ENCODE measurements at regions of chr14 and their contacts with region 1.

Region 1: DNA sequence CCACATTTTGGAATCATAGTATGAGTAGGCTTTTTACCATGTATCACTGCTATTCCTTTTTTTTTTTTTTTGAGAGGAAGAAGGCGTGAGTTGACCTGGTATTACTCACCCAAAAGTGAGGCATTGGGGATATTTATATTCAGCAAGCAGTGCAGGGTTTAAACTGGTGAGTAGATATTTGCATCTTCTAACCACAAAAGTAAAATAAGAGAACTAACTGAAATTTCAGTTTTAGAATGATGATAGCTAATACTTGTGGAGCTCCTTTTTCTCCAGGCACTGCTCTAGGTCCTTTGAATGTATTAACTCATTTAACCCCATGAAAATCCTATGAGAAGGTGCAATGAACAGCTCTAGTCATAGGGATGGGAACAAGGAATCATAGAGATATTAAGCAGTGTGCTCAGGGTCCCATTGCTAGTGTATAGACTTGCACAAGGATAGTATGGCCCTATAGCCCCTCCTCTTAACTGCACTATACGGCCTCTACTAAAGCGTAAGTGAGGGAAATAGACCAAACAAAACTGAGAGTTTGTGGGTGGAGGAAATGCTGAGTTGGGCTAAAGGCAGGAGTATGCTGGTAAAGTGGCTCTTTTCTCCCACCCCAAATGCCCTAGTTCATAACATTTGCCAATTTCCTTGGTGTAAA is 104.3 kb upstream of the MAX start:
- DNase-seq: peak in 1 of 9 donors; percentile 36
- ATAC-seq: peak; percentile 73
- H3K4me3 ChIP-seq: no peak overlapping the region
- H3K4me3 Mint-ChIP-seq: peak overlapping the region in 9 of 10 donors; percentile 41 to 85 (median 70)
- H3K27ac ChIP-seq: peak overlapping the region; percentile 14
- H3K27ac Mint-ChIP-seq: peak overlapping the region; percentile 81 to 93 (median 83)
- H3K4me1 ChIP-seq: peaks cover 40 to 45% of the 10 kb centered on the region in 2 donors
- H3K4me1 Mint-ChIP-seq: peaks cover 35 to 69% (median 58%) of the 10 kb centered on the region in 7 donors
- H3K27me3 ChIP-seq: no peaks in the 10 kb centered on the region
- H3K27me3 Mint-ChIP-seq: no peaks in the 10 kb centered on the region

Region 2: DNA sequence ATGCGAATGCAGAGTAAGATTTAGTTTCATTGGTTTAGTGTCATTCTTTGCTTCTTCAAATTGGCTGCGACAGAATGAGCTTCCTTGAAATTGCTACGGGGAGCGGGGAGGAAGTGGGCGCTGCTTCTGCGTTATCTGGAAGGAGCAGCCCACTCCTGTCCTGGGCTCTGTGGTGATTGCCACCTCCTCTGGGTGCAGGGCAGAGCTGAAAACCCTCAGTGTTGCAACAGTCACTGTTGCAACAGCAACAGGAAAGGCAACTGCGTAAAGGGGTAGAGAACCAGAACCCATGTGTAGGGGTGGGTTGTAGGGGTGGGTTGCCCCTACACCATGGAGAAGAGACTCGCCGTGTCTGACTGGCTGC is 162.0 kb before region 1 on chr14:
- CTCF ChIA-PET with region 1: no interaction called
- POLR2A ChIA-PET with region 1: no interaction called
- intact Hi-C with region 1: no loop called
- DNase-seq: no peak
- ATAC-seq: peak; percentile 81
- H3K4me3 ChIP-seq: no peak overlapping the region
- H3K4me3 Mint-ChIP-seq: no peak overlapping the region
- H3K27ac ChIP-seq: no peak overlapping the region
- H3K27ac Mint-ChIP-seq: peak overlapping the region in 2 of 9 donors; percentile 43 to 62
- H3K4me1 ChIP-seq: no peaks in the 10 kb centered on the region
- H3K4me1 Mint-ChIP-seq: peaks cover 0 to 21% (median 14%) of the 10 kb centered on the region in 7 donors
- H3K27me3 ChIP-seq: no peaks in the 10 kb centered on the region
- H3K27me3 Mint-ChIP-seq: no peaks in the 10 kb centered on the region

Region 3: DNA sequence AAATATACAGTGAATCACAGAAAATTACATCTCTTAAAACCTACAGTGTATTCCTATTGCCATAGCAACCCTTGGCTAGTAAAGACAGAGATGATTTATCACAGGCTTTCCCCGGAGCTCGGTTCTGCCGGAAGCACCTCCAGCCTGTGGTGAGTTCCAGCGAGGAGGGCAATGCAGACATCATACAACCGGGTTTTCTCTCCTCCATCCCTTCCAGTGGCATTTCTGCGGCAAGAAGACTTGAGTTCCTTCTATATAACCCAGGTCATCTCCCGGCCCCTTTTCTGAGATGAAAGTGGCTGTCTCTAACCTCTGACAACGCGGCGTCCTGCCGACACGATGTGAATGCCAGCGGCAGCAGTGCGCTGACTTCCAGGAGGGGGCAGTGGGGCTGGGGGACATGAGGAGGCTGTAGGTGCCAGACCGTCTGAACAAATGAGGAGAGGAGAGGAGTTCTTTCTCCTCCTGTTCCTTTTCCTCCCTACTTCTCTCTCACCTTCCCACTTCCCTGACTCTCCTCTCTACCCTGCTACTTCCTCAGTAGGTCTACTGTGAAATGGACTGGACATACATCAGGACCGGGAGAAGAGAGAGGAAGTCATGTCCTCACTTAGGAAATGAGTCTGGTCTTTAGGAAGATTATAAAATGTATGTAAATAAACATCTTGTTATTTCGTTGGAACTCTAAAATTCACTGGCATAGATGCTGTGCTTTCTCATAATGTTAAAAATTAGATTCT is 35.6 kb before region 1 on chr14:
- CTCF ChIA-PET with region 1: interaction called, 3 read pairs
- POLR2A ChIA-PET with region 1: interaction called, 3 read pairs
- intact Hi-C with region 1: loop called in 1 of 2 experiments (anchors 2 kb)
- DNase-seq: peak in 8 of 9 donors; percentile 17 to 58 (median 31)
- ATAC-seq: peak; percentile 80
- H3K4me3 ChIP-seq: peak overlapping the region; percentile 47
- H3K4me3 Mint-ChIP-seq: peak overlapping the region; percentile 57 to 82 (median 79)
- H3K27ac ChIP-seq: no peak overlapping the region
- H3K27ac Mint-ChIP-seq: peak overlapping the region in 1 of 9 donors; percentile 85
- H3K4me1 ChIP-seq: peaks cover 0 to 4% of the 10 kb centered on the region in 2 donors
- H3K4me1 Mint-ChIP-seq: peaks cover 4 to 41% (median 10%) of the 10 kb centered on the region in 7 donors
- H3K27me3 ChIP-seq: peaks cover 0 to 5% of the 10 kb centered on the region in 2 donors
- H3K27me3 Mint-ChIP-seq: peaks cover 3 to 18% (median 12%) of the 10 kb centered on the region in 5 donors

Region 4: GRCh38 chr14:65594153-65594881 is 387.7 kb after region 1 on chr14:
- CTCF ChIA-PET with region 1: no interaction called
- POLR2A ChIA-PET with region 1: interaction called, 11 read pairs
- intact Hi-C with region 1: no loop called
- DNase-seq: no peak
- ATAC-seq: no peak
- H3K4me3 ChIP-seq: no peak overlapping the region
- H3K4me3 Mint-ChIP-seq: no peak overlapping the region
- H3K27ac ChIP-seq: no peak overlapping the region
- H3K27ac Mint-ChIP-seq: no peak overlapping the region
- H3K4me1 ChIP-seq: no peaks in the 10 kb centered on the region
- H3K4me1 Mint-ChIP-seq: peaks cover 0 to 8% (median 3%) of the 10 kb centered on the region in 7 donors
- H3K27me3 ChIP-seq: no peaks in the 10 kb centered on the region
- H3K27me3 Mint-ChIP-seq: no peaks in the 10 kb centered on the region

Measured in naive thymus-derived CD4-positive, alpha-beta T cell (primary cell).